Transverse colon (tissue), 4 donors: ENCODE measurements at regions of chr13 and their contacts with region 1.

Region 1: GRCh38 chr13:74301258-74301935 is 167.2 kb upstream of the KLF12 start:
- DNase-seq: no peak
- H3K4me3 ChIP-seq: no peak overlapping the region
- H3K27ac ChIP-seq: peak overlapping the region in 3 of 4 donors; percentile 26 to 51 (median 32)
- H3K4me1 ChIP-seq: peaks cover 0 to 21% (median 4%) of the 10 kb centered on the region in 4 donors
- H3K27me3 ChIP-seq: no peaks in the 10 kb centered on the region
- CTCF ChIP-seq: no peak
- EP300 ChIP-seq: no peak
- POLR2A ChIP-seq: no peak

Region 2: GRCh38 chr13:73708393-73708985 is 592.9 kb before region 1 on chr13:
- in situ Hi-C with region 1: no loop called
- intact Hi-C with region 1: no loop called
- DNase-seq: peak; percentile 59
- H3K4me3 ChIP-seq: no peak overlapping the region
- H3K27ac ChIP-seq: no peak overlapping the region
- H3K4me1 ChIP-seq: peaks cover 0 to 11% (median 2%) of the 10 kb centered on the region in 4 donors
- H3K27me3 ChIP-seq: no peaks in the 10 kb centered on the region
- CTCF ChIP-seq: peak; percentile 66 to 89 (median 76)
- EP300 ChIP-seq: no peak
- POLR2A ChIP-seq: no peak

Region 3: DNA sequence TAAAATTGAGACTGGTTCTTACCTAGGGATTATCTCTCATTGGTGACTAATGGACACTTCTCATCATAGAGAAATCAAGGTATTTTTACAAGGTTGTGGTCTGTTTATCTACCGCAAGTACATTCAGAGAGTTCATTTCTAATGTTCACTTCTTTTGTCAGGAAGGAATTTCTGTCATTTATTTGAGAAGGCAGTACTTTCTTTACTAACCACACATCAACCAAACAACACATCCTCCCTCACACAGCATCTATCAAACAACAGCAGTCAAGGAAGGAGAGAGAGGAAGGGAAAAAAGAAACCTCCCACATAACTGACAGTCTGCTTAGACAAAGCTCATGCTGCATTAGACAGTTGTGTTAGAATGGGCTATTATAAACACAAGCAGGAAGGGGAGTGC is 15.2 kb after region 1 on chr13:
- in situ Hi-C with region 1: no loop called
- intact Hi-C with region 1: loop called (anchors 1 kb)
- DNase-seq: no peak
- H3K4me3 ChIP-seq: no peak overlapping the region
- H3K27ac ChIP-seq: no peak overlapping the region
- H3K4me1 ChIP-seq: no peaks in the 10 kb centered on the region
- H3K27me3 ChIP-seq: no peaks in the 10 kb centered on the region
- CTCF ChIP-seq: no peak
- EP300 ChIP-seq: no peak
- POLR2A ChIP-seq: no peak